Dorsolateral prefrontal cortex (tissue), 120 donors: ENCODE measurements at regions of chr3 and their contacts with region 1.

Region 1: GRCh38 chr3:190424478-190425439 is 24.9 kb downstream of the TMEM207 start:
- DNase-seq: peak in 5 of 10 donors; percentile 28 to 51 (median 44)
- H3K4me3 ChIP-seq: peak overlapping the region in 31 of 59 donors; percentile 1 to 51 (median 26)
- H3K27ac ChIP-seq: peak overlapping the region in 3 of 59 donors; percentile 29 to 47 (median 39)
- H3K27me3 ChIP-seq: no peaks in the 10 kb centered on the region
- CTCF ChIP-seq: peak; percentile 44 to 84 (median 71)

Region 2: DNA sequence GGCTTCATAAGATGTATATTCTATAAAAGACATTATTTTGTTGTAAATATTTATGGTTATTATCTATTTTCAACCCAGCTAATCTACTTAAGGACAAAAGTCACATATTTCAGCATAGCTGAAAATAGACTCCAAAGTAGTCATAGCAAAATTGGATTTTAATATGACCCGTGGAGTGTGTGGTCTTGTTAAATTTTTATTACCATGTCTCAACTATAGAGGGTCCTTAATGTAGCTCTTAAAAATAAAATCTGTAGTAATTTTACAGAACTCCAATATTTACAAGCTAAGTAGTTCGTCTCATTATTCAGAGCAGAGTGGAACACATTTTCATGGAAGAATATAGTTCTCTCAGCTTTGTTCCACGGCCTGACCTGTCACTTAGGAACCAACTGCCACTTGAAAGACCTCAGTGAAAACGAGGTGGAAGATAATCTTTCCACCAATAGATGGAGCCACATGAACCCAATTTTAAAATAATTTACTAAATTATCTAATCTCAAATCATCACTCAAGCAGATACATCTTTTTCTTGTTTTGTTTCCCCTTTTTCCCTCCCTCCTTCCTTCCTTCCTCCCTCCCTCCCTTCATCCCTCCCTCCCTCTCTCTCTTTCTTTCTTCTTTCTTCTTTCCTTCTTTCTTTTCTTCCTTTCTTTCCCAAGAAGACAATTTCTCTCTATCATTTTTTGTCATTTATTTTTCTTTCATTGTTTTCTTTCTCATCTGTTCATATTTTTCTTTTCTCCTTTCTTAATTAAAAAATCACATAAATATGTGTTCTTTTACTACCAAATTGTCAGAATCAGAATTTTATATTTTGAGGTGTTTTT is 199.7 kb before region 1 on chr3:
- intact Hi-C with region 1: loop called (anchors 10 kb)
- DNase-seq: no peak
- H3K4me3 ChIP-seq: no peak overlapping the region
- H3K27ac ChIP-seq: no peak overlapping the region
- H3K27me3 ChIP-seq: peaks cover 0 to 3% (median 0%) of the 10 kb centered on the region in 45 donors
- CTCF ChIP-seq: peak; percentile 18 to 75 (median 57)

Region 3: GRCh38 chr3:190339130-190339529 is 85.6 kb before region 1 on chr3:
- intact Hi-C with region 1: loop called in 1 of 2 experiments (anchors 10 kb)
- DNase-seq: no peak
- H3K4me3 ChIP-seq: no peak overlapping the region
- H3K27ac ChIP-seq: no peak overlapping the region
- H3K27me3 ChIP-seq: no peaks in the 10 kb centered on the region
- CTCF ChIP-seq: peak in 1 of 56 donors; percentile 6

Region 4: GRCh38 chr3:190513409-190514162 is 88.8 kb after region 1 on chr3 and contains the start of gene IL1RAP:
- intact Hi-C with region 1: loop called in 1 of 2 experiments (anchors 5 kb)
- DNase-seq: peak; percentile 42 to 91 (median 79)
- H3K4me3 ChIP-seq: peak within 1 kb of the TSS; percentile 56 to 93 (median 80)
- H3K27ac ChIP-seq: peak within 1 kb of the TSS in 58 of 59 donors; percentile 16 to 89 (median 75)
- H3K27me3 ChIP-seq: no peaks in the 10 kb centered on the region
- CTCF ChIP-seq: peak; percentile 31 to 93 (median 65)
- total RNA-seq, gene IL1RAP: 13.2 to 38.2 (median 22.1) TPM

Region 5: GRCh38 chr3:190575437-190576185 is 150.9 kb after region 1 on chr3:
- intact Hi-C with region 1: no loop called
- DNase-seq: no peak
- H3K4me3 ChIP-seq: no peak overlapping the region
- H3K27ac ChIP-seq: peak overlapping the region in 16 of 59 donors; percentile 4 to 50 (median 34)
- H3K27me3 ChIP-seq: no peaks in the 10 kb centered on the region
- CTCF ChIP-seq: no peak